Activated CD8-positive, alpha-beta T cell treated with anti-CD3 and anti-CD28 coated beads, Interleukin-2, amount 10 ng/mL, durations not matched to agents 7 days and 5 days (primary cell): ENCODE measurements at regions of chr19 and their contacts with region 1.

Region 1: DNA sequence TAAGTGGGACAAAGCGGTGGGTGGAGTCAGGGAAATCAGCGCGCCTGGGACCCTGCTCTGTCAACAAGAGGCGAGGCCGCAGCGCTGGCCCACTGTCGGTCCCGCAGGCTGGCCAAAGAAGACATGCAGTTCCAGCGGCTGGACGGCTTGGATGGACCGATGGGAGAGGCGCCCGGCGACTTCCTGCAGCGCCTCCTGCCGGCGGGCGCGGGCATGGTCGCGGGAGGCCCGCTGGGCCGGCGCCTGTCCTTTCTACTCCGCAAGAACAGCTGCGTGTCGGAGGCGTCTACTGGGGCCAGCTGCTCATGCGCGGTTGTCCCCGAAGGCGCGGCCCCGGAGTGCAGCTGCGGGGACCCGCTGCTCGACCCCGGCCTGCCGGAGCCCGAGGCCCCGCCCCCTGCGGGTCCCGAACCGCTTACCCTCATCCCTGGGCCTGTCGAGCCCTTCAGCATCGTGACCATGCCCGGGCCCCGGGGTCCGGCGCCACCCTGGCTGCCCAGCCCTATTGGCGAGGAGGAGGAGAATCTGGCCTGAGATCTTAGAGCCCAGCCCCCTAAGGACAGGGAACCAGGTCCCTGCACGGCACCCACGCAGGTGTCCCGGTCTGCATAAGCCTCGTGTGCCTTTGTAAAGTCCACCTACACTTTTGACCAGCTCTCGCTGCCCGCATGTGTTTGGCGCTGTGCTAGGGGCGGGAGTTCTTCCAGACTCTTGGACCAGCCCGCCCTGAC is 6.1 kb downstream of the BEST2 start:
- DNase-seq: peak; percentile 72
- ATAC-seq: peak; percentile 83
- H3K4me3 Mint-ChIP-seq: peak overlapping the region; percentile 31
- H3K27ac Mint-ChIP-seq: no peak overlapping the region
- H3K4me1 Mint-ChIP-seq: peaks cover 11% of the 10 kb centered on the region
- H3K27me3 Mint-ChIP-seq: peaks cover 5% of the 10 kb centered on the region

Region 2: DNA sequence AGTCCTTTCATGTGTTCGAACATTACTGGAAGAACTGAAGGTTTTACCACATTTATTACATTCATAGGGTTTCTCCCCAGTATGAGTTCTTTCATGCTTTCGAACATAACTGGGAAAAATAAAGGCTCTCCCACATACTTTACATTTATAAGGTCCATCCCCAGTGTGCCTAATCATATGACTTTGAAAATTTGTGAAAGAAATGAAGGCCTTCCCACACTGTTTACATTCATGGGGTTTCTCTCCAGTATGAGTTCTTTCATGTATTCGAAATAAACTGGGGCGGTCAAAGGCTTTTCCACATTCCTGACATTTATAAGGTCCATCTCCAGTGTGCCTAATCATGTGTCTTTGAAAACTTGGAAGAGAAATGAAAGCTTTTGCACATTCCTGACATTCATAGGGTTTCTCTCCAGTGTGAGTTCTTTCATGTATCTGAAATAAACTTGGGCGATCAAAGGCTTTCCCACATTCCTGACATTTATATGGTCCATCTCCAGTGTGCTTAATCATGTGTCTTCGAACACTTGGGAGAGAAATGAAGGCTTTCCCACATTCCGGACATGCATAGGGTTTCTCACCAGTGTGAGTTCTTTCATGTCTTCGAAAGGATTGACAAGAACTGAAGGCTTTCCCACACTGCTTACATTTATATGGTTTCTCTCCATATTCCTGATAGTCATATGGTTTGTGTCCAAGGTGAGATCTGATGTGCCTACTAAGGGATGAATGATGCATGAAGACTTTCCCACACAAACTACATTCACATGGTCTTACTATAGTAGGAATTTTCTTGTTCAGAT is 230.5 kb before region 1 on chr19:
- CTCF ChIA-PET with region 1: no interaction called
- POLR2A ChIA-PET with region 1: no interaction called
- DNase-seq: no peak
- ATAC-seq: no peak
- H3K4me3 Mint-ChIP-seq: peak overlapping the region; percentile 18
- H3K27ac Mint-ChIP-seq: no peak overlapping the region
- H3K4me1 Mint-ChIP-seq: no peaks in the 10 kb centered on the region
- H3K27me3 Mint-ChIP-seq: no peaks in the 10 kb centered on the region

Region 3: DNA sequence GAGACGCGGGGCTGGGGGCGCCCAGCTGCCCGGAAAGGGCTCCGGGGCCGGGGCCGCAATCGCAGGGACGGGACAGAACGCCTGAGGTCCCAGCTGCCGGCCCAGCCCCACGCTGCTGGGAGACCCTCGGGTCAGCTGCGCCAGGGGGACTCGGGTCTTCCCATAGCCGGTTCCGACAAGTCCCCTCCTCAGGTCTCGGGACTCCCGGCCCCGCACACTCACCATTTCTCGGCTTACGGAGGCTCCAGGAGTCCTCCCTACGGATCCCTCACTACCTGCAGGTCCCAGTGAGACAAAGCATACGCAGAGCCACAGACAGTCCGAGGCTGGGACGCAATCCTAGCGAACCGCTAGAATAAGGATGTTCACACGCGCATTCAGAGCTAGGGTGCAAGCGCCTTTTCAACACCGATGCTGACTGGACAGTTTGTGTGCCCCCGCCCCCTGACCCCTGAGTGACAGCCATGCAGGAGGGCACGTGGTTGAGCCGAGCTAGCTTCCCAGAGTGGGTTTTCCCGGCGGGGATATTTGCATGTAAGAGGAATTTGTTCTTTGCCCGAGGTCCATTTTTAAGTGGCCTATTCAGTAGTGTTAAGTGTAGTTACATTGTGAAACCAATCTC is 160.7 kb before region 1 on chr19:
- CTCF ChIA-PET with region 1: no interaction called
- POLR2A ChIA-PET with region 1: no interaction called
- DNase-seq: no peak
- ATAC-seq: no peak
- H3K4me3 Mint-ChIP-seq: no peak overlapping the region
- H3K27ac Mint-ChIP-seq: no peak overlapping the region
- H3K4me1 Mint-ChIP-seq: no peaks in the 10 kb centered on the region
- H3K27me3 Mint-ChIP-seq: no peaks in the 10 kb centered on the region

Region 4: DNA sequence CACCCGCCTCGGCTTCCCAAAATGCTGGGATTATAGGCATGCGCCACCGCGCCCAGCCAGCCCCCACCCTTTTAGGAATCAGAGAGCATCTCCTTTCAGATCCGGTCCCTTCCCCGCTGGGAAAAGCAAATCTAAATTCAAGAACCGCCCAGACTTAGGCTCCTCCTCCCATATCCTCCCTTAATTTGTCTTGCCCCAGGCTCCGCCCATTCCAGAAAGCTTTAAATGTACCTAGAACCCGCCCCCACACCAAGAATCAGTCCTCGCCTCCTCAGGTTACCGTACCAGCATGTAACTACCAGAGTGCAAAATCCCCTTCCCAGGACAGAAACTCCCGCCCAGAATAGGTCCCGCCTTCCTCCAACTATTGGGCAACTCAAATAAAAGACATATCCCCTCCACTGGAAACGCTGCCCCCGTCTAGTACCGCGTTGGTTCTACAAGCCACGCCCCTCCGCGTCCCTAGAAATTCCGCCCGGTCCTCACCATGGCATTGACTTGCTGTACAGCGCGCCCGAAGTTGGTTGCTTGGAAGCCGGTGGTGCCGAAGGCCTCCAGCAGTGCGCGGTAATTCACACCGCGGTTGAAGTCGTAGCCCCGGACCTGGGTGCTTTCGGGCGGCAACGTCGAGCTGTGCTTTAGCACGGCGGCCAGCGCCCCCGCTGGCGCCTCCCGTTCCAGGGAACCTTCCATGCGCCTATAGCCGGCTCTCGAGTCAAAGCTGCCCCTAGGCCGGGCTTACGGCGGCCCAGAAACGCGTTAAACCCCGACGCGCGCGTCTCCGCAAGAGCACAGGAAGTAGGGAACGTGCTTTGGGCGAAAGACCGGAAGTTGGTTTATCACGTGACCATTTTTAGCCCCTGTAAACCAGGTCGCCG is 76.4 kb before region 1 on chr19 and contains the start of gene DHPS:
- CTCF ChIA-PET with region 1: interaction called, 10 read pairs
- POLR2A ChIA-PET with region 1: interaction called, 3 read pairs
- DNase-seq: peak; percentile 97
- ATAC-seq: peak; percentile 81
- H3K4me3 Mint-ChIP-seq: peak within 1 kb of the TSS; percentile 94
- H3K27ac Mint-ChIP-seq: peak within 1 kb of the TSS; percentile 95
- H3K4me1 Mint-ChIP-seq: peaks cover 23% of the 10 kb centered on the region
- H3K27me3 Mint-ChIP-seq: no peaks in the 10 kb centered on the region
- total RNA-seq, gene DHPS: 109 to 121 TPM

Region 5: DNA sequence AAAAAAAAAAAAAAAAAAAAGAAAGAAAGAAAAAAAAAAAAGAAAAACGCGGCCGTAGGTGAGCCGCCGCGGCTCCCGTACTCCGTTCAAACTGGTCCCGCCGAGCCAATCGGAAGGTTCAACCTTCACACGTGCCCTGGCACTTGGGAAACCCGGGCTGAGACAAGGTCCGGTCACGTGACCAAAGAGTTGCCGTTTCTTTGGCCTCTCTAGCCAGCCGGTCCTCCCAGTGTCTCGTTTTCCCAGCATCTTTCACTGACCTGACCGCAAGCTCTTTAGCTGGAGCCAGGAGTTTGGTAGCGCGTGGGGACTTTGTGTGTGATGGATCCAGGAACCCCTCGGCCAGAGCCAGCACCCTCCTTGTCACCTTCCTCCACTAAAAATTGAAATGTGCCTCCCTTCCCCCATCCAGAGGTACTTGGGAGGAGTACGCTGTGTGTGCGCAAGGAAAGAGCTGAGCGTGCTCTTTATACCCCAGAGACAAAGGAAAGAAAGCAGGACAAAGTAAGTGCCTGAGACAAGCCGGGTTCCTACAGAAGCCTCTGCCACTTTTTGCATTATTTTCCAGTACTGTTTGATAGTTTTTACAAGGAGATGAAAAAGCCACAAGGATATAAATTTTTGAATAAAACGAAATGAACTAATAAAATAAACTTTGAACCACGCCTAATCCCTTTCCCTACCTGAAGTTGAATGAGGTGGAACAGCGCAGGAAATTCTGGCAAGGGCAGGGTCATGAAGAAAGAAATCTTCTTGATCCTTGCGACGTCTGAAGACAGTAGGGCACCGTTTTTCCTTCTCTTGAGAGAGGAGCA is 34.9 kb before region 1 on chr19:
- CTCF ChIA-PET with region 1: interaction called, 81 read pairs
- POLR2A ChIA-PET with region 1: no interaction called
- DNase-seq: peak; percentile 98
- ATAC-seq: peak; percentile 91
- H3K4me3 Mint-ChIP-seq: peak overlapping the region; percentile 85
- H3K27ac Mint-ChIP-seq: peak overlapping the region; percentile 86
- H3K4me1 Mint-ChIP-seq: peaks cover 29% of the 10 kb centered on the region
- H3K27me3 Mint-ChIP-seq: no peaks in the 10 kb centered on the region

Region 6: GRCh38 chr19:12777217-12778016 is 19.7 kb after region 1 on chr19:
- CTCF ChIA-PET with region 1: interaction called, 19 read pairs
- POLR2A ChIA-PET with region 1: interaction called, 3 read pairs
- DNase-seq: peak; percentile 85
- ATAC-seq: peak; percentile 48
- H3K4me3 Mint-ChIP-seq: peak overlapping the region; percentile 72
- H3K27ac Mint-ChIP-seq: peak overlapping the region; percentile 85
- H3K4me1 Mint-ChIP-seq: peaks cover 48% of the 10 kb centered on the region
- H3K27me3 Mint-ChIP-seq: no peaks in the 10 kb centered on the region

Region 7: GRCh38 chr19:12796146-12797071 is 38.7 kb after region 1 on chr19:
- CTCF ChIA-PET with region 1: interaction called, 383 read pairs
- POLR2A ChIA-PET with region 1: interaction called, 7 read pairs
- DNase-seq: peak; percentile 84
- ATAC-seq: no peak
- H3K4me3 Mint-ChIP-seq: peak overlapping the region; percentile 63
- H3K27ac Mint-ChIP-seq: peak overlapping the region; percentile 82
- H3K4me1 Mint-ChIP-seq: peaks cover 39% of the 10 kb centered on the region
- H3K27me3 Mint-ChIP-seq: no peaks in the 10 kb centered on the region

Region 8: DNA sequence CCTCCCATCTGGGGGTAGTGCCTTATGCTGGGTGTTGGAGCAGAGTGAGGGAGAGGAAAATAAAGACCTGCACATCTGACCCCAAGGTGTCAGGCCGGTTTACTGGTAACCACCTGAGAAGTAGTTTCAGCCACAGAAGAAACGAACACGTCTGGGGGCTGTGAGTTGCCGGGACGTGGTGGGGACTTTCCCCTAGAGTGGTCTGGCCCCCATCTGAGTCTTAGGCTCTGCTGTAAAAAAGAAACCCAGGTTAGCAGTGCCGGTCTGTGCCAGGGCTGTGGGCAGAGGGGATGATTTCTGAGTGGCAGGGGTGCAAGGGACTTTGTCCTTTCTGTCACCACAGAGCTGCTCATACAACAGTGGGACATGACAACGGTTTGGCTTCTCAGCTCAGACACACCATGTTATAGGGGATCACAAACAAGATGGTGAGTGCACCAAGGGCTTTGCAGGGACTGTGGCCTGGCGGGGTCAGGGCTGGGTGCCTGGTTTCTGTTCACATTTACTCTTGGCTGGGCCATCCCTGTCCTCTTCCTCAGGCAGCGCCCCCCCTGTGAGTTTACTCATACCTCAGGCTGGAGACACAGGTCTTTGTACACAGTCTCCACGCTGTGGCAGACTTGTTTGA is 142.3 kb after region 1 on chr19:
- CTCF ChIA-PET with region 1: no interaction called
- POLR2A ChIA-PET with region 1: no interaction called
- DNase-seq: peak; percentile 41
- ATAC-seq: peak; percentile 72
- H3K4me3 Mint-ChIP-seq: no peak overlapping the region
- H3K27ac Mint-ChIP-seq: peak overlapping the region; percentile 64
- H3K4me1 Mint-ChIP-seq: peaks cover 22% of the 10 kb centered on the region
- H3K27me3 Mint-ChIP-seq: no peaks in the 10 kb centered on the region

Region 9: GRCh38 chr19:12956446-12957388 is 199.0 kb after region 1 on chr19 and contains the start of gene GADD45GIP1:
- CTCF ChIA-PET with region 1: no interaction called
- POLR2A ChIA-PET with region 1: no interaction called
- DNase-seq: peak; percentile 86
- ATAC-seq: peak; percentile 96
- H3K4me3 Mint-ChIP-seq: peak within 1 kb of the TSS; percentile 88
- H3K27ac Mint-ChIP-seq: peak within 1 kb of the TSS; percentile 96
- H3K4me1 Mint-ChIP-seq: peaks cover 42% of the 10 kb centered on the region
- H3K27me3 Mint-ChIP-seq: no peaks in the 10 kb centered on the region
- total RNA-seq, gene GADD45GIP1: 23.4 to 25.4 TPM